Activated T-helper 2 cell treated with anti-CD3 and anti-CD28 coated beads, Interferon-gamma antibody, Interleukin-2, Interleukin-4, amounts not matched to agents 10 μg/mL and 5 μg/mL and 100 μg/mL, durations not matched to agents 14 hours and 24 hours and 36 hours (primary cell): ENCODE measurements at regions of chr12 and their contacts with region 1.

Region 1: DNA sequence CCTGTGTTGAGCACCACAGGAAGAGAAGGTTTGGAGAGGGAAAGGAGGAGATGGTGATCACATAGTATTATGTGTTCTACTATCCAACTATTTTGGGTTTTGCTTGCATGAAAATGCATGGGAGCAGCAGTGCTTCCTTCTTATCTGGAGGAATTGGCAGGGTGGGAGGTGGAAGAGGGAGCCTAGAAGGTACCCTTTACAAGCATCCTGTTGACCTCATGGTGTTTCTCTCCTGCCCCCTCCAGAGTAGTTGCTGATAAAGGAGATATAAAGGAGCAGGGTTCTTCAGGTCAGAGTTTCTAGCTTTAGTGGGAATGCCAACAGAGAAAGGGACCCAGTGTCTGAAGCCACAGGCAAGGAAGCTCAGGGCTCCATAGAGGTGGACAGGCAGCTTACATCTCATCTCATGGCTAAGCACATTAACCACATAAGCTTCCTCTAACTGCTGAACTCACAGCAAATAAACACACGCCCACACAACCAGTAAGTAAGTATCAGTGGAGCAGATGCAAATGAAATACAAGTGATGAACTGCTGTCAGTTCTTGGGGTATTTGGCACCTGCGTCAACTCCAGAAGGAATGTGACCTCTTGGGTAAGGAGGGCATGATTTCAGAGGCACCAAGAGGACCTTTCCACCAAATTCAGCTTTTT is 174.2 kb upstream of the SLC38A2 start:
- DNase-seq: peak; percentile 22
- H3K4me3 Mint-ChIP-seq: peak overlapping the region; percentile 28
- H3K27ac Mint-ChIP-seq: peak overlapping the region; percentile 76
- H3K4me1 Mint-ChIP-seq: peaks cover 62% of the 10 kb centered on the region
- H3K27me3 Mint-ChIP-seq: no peaks in the 10 kb centered on the region

Region 2: DNA sequence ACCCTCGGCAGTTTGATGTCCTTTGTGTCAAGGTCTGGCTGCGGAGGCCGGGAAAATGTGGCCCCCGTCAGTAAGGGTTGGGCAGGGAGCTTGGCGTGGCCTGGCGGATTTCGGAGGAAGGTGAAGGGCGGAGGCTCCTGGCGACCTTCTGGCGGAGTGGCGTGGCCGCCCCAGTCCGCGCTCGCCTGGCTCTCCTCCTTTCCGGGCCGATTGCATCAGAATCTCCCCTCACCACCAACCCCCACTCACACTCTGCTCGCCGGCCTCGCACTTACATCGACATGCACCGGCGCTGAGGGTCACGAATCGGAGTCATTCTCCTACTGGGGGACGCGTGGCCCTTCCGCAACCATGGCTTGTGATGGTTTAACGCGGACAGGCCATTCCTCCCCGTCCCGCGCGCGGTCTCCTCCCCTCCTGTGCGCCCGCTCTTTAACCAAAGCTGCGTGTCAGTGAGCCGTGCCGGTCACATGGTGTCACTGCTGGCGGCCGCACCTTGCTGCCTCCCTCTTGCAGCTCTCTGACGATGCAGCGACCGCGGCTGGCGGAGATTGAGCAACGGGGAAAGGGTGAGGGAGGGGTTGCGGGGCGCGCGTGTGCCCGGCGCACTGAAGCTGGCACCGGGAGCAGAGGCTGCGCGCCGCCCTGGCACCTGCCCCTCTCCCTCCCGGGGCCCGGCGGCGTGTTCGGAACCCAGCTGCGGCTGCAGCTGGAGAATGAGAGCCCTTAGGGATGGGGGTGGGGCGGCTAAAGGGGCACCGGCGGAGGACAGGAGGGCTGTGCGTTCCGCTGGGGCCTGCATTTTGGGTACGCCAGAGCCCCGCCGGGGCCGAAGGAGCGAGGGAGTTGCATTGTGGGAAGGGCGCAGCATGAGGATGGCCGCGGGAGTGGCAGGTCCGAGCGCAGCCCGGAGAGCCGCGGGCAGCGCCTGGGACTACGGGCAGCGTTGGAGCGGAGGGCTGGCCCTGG is 277.9 kb before region 1 on chr12 and contains the start of gene SLC38A1:
- intact Hi-C with region 1: loop called (anchors 5 kb)
- DNase-seq: peak; percentile 86
- H3K4me3 Mint-ChIP-seq: no peak within 1 kb of the TSS
- H3K27ac Mint-ChIP-seq: no peak within 1 kb of the TSS
- H3K4me1 Mint-ChIP-seq: peaks cover 26% of the 10 kb centered on the region
- H3K27me3 Mint-ChIP-seq: no peaks in the 10 kb centered on the region
- total RNA-seq, gene SLC38A1: 152 and 154 TPM in 2 replicates

Region 3: DNA sequence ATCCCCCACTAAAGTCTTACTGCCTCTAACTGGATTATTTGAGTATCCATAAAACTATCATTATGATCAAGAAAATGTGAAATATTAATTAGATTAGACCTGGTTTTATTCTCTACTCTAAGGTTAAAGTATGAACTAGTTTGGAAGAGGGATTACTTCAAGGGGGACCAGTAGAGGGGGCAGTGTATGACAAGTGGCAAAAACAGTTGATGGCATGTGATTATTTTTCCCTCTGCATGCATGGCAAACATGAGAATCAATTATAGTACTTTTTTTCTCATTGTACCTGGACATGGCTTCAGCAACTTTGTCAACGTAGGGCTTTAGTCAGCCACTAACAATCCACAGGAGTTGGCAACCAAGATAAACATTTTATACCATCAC is 29.2 kb before region 1 on chr12:
- intact Hi-C with region 1: loop called (anchors 1 kb)
- DNase-seq: no peak
- H3K4me3 Mint-ChIP-seq: peak overlapping the region; percentile 45
- H3K27ac Mint-ChIP-seq: peak overlapping the region; percentile 93
- H3K4me1 Mint-ChIP-seq: peaks cover 77% of the 10 kb centered on the region
- H3K27me3 Mint-ChIP-seq: no peaks in the 10 kb centered on the region

Region 4: DNA sequence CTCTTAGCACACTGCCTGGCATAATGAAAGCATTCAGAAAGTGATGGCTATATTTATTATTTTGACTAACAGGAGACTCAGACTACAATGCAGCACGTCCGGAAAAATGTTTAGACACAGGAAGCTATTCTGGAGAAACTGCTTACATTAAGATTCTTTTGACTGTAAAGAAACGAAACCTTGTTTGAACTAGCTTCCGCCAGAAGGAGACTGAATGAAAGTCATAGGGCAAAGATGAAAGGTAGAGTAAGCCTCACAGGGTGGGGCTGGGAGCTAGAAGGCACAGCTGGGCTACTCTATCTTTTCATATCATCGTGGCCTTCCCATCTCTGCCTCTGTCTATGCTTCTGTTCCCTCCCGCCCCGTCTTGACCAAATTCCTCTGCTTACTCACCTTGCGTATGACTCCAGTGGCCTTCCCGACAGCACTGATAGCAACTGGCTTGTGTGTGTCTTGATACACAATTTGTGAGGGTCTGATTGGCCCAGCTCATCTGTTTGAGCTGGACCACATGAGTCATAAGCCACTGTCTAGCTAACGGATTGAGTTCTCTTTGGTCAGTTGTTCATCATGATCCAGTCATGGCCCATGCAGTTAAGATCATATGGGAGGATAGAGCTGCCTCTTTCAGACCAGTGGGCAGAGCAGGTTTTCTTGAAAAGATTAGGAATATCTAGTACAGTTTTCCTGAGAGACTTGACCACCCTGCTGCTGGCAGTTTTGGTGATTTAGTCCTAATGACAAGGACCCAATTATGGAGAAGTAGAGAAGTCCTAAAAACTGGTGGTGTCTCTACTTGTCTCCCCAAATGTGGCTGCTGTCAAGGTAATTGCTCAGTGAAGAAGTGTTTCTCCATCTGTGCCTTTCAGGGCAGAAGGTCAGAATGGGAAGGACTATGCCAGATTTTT is 22.6 kb before region 1 on chr12:
- intact Hi-C with region 1: loop called (anchors 1 kb)
- DNase-seq: peak; percentile 55
- H3K4me3 Mint-ChIP-seq: peak overlapping the region; percentile 79
- H3K27ac Mint-ChIP-seq: peak overlapping the region; percentile 97
- H3K4me1 Mint-ChIP-seq: peaks cover 53% of the 10 kb centered on the region
- H3K27me3 Mint-ChIP-seq: no peaks in the 10 kb centered on the region

Region 5: DNA sequence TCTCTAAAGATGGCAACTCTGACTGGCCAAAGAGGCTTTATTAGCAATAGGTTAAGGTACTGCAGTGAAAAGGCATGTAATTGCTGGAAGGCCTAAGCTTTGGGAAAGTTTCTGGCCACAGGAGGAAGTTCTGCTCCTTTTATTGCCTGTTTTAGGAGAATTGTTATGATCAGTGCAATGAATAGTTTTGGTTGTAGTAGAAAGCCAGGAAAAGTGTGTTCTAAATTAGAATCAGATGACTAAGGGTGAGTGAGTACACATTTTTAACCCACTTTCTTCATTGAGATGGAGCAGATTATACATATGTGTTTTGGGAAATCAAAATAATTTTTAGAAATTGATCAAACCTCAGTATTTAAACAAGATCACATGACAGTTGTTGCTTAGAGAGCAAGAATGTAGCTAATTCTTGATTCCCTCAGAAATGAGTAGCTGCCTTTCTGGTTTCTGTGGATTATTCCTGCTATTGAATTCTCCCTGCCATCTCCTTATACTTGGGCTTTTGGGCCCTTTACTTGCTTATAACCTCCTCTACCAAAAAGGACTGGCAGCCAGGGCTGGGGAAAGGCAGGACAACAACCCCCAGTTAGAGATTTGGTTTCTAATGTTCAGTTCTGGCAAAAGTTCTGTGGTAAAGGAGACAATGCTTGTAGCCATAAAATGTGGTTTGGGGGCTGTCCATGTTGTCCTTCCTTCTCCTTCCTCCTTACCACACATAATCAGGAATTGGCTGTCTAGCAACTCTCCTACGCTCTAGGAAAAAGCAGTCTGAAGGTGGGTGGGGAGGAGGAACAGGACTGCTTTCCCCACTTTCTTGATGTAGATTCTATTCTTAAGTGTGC is 61.9 kb after region 1 on chr12:
- intact Hi-C with region 1: loop called (anchors 1 kb)
- DNase-seq: no peak
- H3K4me3 Mint-ChIP-seq: peak overlapping the region; percentile 37
- H3K27ac Mint-ChIP-seq: peak overlapping the region; percentile 65
- H3K4me1 Mint-ChIP-seq: peaks cover 37% of the 10 kb centered on the region
- H3K27me3 Mint-ChIP-seq: no peaks in the 10 kb centered on the region

Region 6: DNA sequence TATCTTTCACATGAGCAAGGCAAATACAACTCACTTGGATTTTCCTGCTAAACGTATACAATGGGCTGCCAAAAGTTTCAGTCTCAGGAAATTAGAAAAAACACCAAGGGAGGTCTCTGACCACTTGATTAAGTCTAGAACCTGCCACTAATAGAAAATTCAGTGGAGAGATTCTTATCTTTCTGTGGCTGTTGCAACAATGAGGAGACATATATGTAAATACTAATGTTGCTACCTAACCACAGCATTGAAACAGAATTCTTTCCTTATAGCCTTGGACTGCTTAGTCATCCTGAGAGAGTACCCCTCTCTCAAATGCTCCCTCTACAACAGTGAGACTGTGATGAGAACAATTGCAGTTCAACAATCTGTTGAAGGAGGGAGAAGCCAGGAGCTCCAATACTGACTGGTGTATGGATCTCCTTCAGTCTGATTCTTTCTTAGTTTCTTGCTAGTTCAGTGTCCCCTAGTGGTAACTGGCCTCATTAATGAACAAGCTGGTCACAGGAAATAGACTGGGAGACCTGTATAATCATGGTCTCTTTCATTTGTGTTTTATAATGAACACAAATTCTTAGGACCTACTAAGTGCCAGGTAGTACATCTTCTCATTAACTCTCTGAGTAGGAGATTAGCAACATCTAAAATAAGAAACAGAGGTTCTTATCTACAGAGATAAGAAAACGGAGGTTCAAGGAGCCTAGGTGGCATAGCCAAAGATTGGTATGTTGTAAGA is 114.5 kb after region 1 on chr12:
- intact Hi-C with region 1: loop called (anchors 2 kb)
- DNase-seq: no peak
- H3K4me3 Mint-ChIP-seq: no peak overlapping the region
- H3K27ac Mint-ChIP-seq: peak overlapping the region; percentile 58
- H3K4me1 Mint-ChIP-seq: peaks cover 44% of the 10 kb centered on the region
- H3K27me3 Mint-ChIP-seq: no peaks in the 10 kb centered on the region